Dorsolateral prefrontal cortex (tissue), 120 donors: ENCODE measurements at regions of chr5 and their contacts with region 1.

Region 1: GRCh38 chr5:178461004-178461730 is 129.0 kb downstream of the COL23A1 start:
- DNase-seq: peak; percentile 69 to 83 (median 80)
- H3K4me3 ChIP-seq: no peak overlapping the region
- H3K27ac ChIP-seq: no peak overlapping the region
- H3K27me3 ChIP-seq: no peaks in the 10 kb centered on the region
- CTCF ChIP-seq: peak in 55 of 56 donors; percentile 55 to 86 (median 76)

Region 2: GRCh38 chr5:178502401-178503100 is 41.4 kb after region 1 on chr5:
- intact Hi-C with region 1: no loop called
- DNase-seq: no peak
- H3K4me3 ChIP-seq: no peak overlapping the region
- H3K27ac ChIP-seq: no peak overlapping the region
- H3K27me3 ChIP-seq: no peaks in the 10 kb centered on the region
- CTCF ChIP-seq: no peak

Region 3: DNA sequence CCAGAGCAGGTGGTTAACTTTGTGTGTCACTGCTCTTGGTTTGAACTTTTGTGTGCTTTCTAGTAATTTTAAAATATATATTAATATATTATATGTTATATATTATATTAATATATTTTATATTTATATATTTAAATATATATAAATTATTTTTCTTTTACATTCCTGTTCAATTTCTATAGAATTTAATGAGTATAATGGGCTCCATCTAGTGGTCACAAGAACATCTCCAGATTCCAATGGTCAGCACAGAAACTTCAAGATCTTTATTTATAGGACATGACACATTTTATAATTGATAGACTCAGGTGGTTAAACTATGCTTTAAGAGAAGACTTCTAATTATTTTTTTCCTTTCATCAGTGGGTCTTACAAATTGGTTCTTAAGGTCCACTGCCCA is 89.9 kb after region 1 on chr5:
- intact Hi-C with region 1: loop called in 1 of 2 experiments (anchors 5 kb)
- DNase-seq: no peak
- H3K4me3 ChIP-seq: no peak overlapping the region
- H3K27ac ChIP-seq: no peak overlapping the region
- H3K27me3 ChIP-seq: no peaks in the 10 kb centered on the region
- CTCF ChIP-seq: peak in 55 of 56 donors; percentile 25 to 79 (median 62)